GM18951 (cell line): ENCODE measurements at regions of chr7 and their contacts with region 1.

Region 1: DNA sequence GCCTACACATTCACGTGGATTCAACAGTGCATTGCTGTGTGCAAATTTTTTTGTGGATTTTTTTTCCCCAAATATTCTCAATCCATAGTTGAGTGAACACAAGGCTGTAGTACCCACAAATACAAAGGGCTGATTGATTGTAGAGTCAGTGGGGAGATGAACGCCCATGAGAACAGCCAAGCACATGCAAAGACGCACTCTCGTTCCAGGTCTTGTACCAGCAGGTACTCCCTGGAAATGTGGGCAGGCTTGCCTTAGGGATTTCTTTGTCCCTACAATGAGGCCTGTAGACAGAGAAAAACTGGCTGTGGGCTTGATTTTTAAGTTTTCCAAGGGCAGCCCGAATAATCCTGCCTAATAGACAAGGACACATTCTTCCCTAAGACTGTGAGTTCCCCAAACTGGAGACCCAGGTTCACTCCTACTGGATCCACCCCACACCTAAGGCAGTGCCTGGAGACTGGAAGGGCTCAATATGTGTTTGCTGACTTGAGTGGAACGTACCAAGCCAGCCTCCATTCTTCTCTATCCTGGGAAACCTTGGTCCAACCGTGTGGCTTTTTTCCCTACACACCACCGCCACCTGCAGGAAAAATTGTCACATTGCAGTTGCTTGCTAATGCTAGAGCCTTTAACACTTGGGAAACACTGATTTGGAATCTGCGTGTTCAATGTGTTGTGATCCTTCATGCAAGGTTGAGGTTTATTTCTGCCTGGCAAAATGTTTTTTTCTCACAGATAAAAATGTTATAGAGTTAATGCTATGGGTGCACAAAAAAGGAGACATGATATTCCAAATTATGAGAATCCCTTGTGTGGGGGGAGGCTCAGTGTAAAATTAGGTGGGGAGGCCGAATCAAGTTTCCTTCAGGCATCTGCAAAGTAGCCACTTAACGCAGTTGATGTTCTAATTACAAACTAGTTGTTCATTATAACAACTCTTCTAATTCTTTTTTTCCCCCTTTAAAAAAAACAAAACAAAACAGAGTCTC is 49.3 kb downstream of the PPP1R17 start:
- POLR2A ChIP-seq: no peak

Region 2: GRCh38 chr7:31134246-31135188 is 601.8 kb before region 1 on chr7:
- in situ Hi-C with region 1: loop called (anchors 10 kb)
- POLR2A ChIP-seq: no peak